ENCODE measurements at regions of chr5 and their contacts with region 1.

Region 1: GRCh38 chr5:79878721-79879336 is 112.2 kb downstream of the MTX3 start:
- DNase-seq: peak in 1 of 2 experiments; percentile 12
- H3K4me3 ChIP-seq: no peak overlapping the region
- H3K27ac ChIP-seq: no peak overlapping the region
- H3K4me1 ChIP-seq: no peaks in the 10 kb centered on the region
- H3K27me3 ChIP-seq: peaks cover 2% of the 10 kb centered on the region
- CTCF ChIP-seq: peak; percentile 62

Region 2: GRCh38 chr5:80055491-80056170 is 176.8 kb after region 1 on chr5:
- CTCF ChIA-PET with region 1: interaction called, 9 read pairs
- POLR2A ChIA-PET with region 1: no interaction called
- intact Hi-C with region 1: loop called (anchors 10 kb)
- DNase-seq: peak; percentile 87 to 89
- H3K4me3 ChIP-seq: peak overlapping the region; percentile 38; the same call in 1 of the 2 replicates
- H3K27ac ChIP-seq: peak overlapping the region; percentile 69
- H3K4me1 ChIP-seq: peaks cover 38% of the 10 kb centered on the region
- H3K27me3 ChIP-seq: no peaks in the 10 kb centered on the region
- CTCF ChIP-seq: no peak

Measured in PC-9 (cell line).